ENCODE measurements at regions of chr19 and their contacts with region 1.

Region 1: DNA sequence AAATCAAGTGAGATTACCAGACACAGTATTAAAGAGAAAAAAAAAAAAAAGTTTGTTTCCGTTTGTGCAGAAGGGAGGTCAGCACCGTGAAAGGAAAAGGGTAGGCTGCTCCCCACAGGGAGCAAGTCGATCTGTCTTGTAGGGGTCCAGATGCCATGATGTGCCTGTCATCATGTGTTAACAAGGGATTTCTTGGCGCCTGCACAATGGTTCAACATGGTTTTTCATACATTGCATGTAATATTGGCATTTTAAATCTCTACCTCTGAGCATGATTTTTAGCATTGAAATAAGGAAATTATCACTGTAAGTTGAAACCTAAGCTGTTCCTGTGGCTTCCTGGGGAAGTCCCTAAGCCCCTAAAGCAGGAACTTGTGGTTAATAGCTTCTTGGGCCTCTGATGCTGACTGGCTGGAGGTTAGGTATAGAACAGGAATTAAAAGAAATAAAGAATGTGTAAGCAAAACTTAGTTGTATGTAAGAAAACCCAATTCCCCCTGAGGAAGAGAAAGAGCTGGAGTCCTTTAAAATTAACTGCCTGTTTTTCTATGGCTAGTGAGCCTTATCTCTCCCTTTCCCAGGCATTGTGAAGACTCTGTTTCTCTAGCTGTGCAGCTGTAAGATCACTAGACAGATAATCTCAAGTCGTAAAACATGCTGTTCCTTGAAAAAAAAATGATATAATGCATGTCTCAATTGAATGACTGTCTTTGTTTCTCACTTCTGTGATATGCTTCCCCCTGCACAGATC is 7.4 kb upstream of the FCGBP start:
- DNase-seq: peak; percentile 74
- H3K4me3 Mint-ChIP-seq: peak overlapping the region; percentile 51
- H3K27ac Mint-ChIP-seq: peak overlapping the region; percentile 96
- H3K4me1 Mint-ChIP-seq: peaks cover 83% of the 10 kb centered on the region
- H3K27me3 Mint-ChIP-seq: no peaks in the 10 kb centered on the region
- CTCF ChIP-seq: no peak

Region 2: GRCh38 chr19:39590265-39590664 is 351.5 kb before region 1 on chr19:
- CTCF ChIA-PET with region 1: no interaction called
- intact Hi-C with region 1: no loop called
- DNase-seq: no peak
- H3K4me3 Mint-ChIP-seq: no peak overlapping the region
- H3K27ac Mint-ChIP-seq: no peak overlapping the region
- H3K4me1 Mint-ChIP-seq: peaks cover 6% of the 10 kb centered on the region
- H3K27me3 Mint-ChIP-seq: peaks cover 82% of the 10 kb centered on the region
- CTCF ChIP-seq: no peak

Region 3: GRCh38 chr19:39906820-39907611 is 34.8 kb before region 1 on chr19:
- CTCF ChIA-PET with region 1: no interaction called
- intact Hi-C with region 1: loop called (anchors 5 kb)
- DNase-seq: no peak
- H3K4me3 Mint-ChIP-seq: no peak overlapping the region
- H3K27ac Mint-ChIP-seq: no peak overlapping the region
- H3K4me1 Mint-ChIP-seq: peaks cover 8% of the 10 kb centered on the region
- H3K27me3 Mint-ChIP-seq: no peaks in the 10 kb centered on the region
- CTCF ChIP-seq: no peak

Region 4: DNA sequence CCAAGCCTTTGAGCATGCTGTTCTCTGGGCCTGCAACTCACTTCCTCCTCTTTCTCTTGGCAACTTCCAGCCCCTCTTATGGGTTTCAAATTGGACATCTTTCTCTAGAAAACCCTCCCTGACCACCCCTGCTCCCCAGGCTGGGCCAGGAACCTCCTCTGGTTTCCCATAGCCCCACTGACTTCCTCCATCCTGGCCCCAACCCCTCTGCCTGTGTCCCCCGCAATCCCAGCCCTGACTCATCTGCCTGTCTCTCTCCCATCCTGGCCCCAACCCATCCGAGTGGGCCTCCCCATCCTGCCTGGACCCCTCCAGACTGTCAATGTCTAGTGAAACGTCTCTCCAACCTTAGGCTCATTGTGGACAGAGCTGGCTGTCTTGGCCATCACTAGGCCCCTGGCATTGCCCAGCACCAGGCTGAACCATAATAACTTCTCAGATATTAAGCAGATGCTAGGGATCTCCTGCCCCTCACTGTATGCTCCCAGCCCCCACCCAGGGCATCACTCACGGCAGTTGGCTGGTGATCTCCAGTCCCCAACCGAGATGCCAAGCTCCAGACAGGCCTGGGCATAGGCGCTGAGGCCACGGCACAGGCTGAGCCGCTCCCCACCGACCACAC is 24.1 kb before region 1 on chr19:
- CTCF ChIA-PET with region 1: no interaction called
- intact Hi-C with region 1: no loop called
- DNase-seq: no peak
- H3K4me3 Mint-ChIP-seq: no peak overlapping the region
- H3K27ac Mint-ChIP-seq: no peak overlapping the region
- H3K4me1 Mint-ChIP-seq: no peaks in the 10 kb centered on the region
- H3K27me3 Mint-ChIP-seq: no peaks in the 10 kb centered on the region
- CTCF ChIP-seq: no peak

Measured in Calu3 (cell line).